ENCODE measurements at regions of chr1 and their contacts with region 1.

Region 1: DNA sequence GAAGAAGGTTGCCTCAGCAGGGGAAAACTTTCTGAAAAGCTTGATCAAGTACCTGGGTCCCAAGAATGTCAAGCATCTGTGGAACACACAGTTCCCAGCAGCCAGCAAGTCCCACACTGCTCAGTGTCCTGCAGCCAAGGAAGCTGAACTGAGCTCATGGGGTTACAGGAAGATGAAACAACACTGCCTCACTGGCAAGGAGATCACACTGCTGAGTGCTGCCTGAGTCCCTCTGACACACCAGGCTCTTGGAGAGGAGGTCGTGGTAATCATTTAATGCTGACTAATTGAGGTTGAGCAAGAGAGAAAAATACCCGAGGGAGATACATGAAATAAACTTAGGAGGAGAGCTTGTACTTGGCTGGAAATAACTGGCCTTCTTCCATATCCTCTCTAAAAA is 75.2 kb downstream of the MPZL1 start:
- DNase-seq: peak; percentile 100
- H3K4me3 Mint-ChIP-seq: peak overlapping the region; percentile 57
- H3K27ac Mint-ChIP-seq: peak overlapping the region; percentile 83
- H3K4me1 Mint-ChIP-seq: peaks cover 63% of the 10 kb centered on the region
- H3K27me3 Mint-ChIP-seq: no peaks in the 10 kb centered on the region
- CTCF ChIP-seq: peak; percentile 12

Region 2: DNA sequence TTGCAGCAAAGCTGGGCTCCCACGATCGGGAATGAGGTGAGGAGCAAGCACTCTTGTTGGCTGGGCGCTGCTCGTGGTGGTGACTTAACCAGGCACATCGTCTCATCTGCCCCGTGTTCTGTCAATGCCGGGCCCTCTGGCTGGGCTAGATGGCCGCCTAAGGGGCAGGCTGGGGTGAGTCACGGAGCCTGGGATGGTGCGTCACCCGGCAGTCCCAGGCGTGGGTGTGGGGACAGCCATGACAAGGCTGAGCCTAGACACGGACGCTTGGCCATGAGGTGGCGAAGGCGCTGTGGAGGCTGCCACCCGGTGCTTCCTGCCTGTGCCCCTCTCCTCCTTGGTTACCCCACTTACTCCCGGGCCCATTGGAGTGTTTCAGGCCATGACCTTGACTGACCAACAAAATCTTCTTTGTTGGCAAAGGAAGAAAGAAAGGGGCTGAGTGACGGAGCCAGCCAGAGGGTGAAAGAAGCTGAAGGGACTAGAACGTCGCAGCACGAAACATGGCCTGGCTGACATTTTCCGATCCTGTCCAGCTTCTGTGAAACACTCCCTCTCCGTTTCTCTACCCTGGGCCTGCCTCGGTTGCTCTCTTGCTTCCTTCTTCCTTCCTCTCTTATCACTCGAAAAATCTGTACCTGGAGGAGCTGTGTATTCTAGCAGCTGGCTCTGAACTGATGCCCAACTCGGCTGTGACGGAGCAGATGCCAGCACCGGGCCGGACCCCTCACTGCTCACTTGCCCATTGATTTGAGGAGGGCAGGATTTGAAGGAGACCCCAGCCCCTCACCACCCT is 279.3 kb before region 1 on chr1:
- CTCF ChIA-PET with region 1: no interaction called
- POLR2A ChIA-PET with region 1: no interaction called
- intact Hi-C with region 1: no loop called
- DNase-seq: peak; percentile 88
- H3K4me3 Mint-ChIP-seq: no peak overlapping the region
- H3K27ac Mint-ChIP-seq: no peak overlapping the region
- H3K4me1 Mint-ChIP-seq: no peaks in the 10 kb centered on the region
- H3K27me3 Mint-ChIP-seq: no peaks in the 10 kb centered on the region
- CTCF ChIP-seq: no peak

Region 3: GRCh38 chr1:167715157-167715999 is 81.6 kb before region 1 on chr1:
- CTCF ChIA-PET with region 1: interaction called, 46 read pairs
- POLR2A ChIA-PET with region 1: interaction called, 202 read pairs
- intact Hi-C with region 1: loop called (anchors 1 kb)
- DNase-seq: peak; percentile 97
- H3K4me3 Mint-ChIP-seq: peak overlapping the region; percentile 88
- H3K27ac Mint-ChIP-seq: peak overlapping the region; percentile 91
- H3K4me1 Mint-ChIP-seq: peaks cover 16% of the 10 kb centered on the region
- H3K27me3 Mint-ChIP-seq: no peaks in the 10 kb centered on the region
- CTCF ChIP-seq: peak; percentile 98

Region 4: GRCh38 chr1:167721617-167722151 is 75.3 kb before region 1 on chr1 and contains the start of gene MPZL1:
- CTCF ChIA-PET with region 1: interaction called, 46 read pairs
- POLR2A ChIA-PET with region 1: interaction called, 202 read pairs
- intact Hi-C with region 1: loop called (anchors 1 kb)
- DNase-seq: peak; percentile 95
- H3K4me3 Mint-ChIP-seq: peak within 1 kb of the TSS; percentile 84
- H3K27ac Mint-ChIP-seq: peak within 1 kb of the TSS; percentile 92
- H3K4me1 Mint-ChIP-seq: peaks cover 52% of the 10 kb centered on the region
- H3K27me3 Mint-ChIP-seq: no peaks in the 10 kb centered on the region
- CTCF ChIP-seq: no peak
- total RNA-seq, gene MPZL1: 164 and 169 TPM in 2 replicates

Region 5: DNA sequence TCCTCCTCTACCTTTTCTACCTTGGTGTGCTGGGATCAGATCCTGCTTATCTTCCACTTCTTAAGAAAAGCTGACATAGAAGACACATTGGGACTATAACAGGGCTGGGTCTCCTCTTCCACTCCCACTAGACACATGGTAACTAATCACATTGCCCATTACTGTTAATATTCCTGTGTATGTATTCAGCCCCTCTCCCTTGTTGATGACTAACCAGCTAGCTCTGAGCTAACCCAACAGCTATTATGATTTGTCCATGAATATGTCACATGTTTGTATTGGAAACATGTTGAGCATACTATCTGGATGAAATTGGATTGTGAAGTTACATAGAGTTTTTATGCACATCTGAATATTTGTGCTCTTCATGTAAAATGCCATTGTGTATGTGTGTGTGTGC is 22.3 kb before region 1 on chr1:
- CTCF ChIA-PET with region 1: interaction called, 7 read pairs
- POLR2A ChIA-PET with region 1: interaction called, 28 read pairs
- intact Hi-C with region 1: no loop called
- DNase-seq: no peak
- H3K4me3 Mint-ChIP-seq: no peak overlapping the region
- H3K27ac Mint-ChIP-seq: peak overlapping the region; percentile 0
- H3K4me1 Mint-ChIP-seq: peaks cover 25% of the 10 kb centered on the region
- H3K27me3 Mint-ChIP-seq: no peaks in the 10 kb centered on the region
- CTCF ChIP-seq: no peak

Region 6: GRCh38 chr1:167784876-167785550 is 12.0 kb before region 1 on chr1:
- CTCF ChIA-PET with region 1: interaction called, 67 read pairs
- POLR2A ChIA-PET with region 1: interaction called, 73 read pairs
- intact Hi-C with region 1: no loop called
- DNase-seq: no peak
- H3K4me3 Mint-ChIP-seq: no peak overlapping the region
- H3K27ac Mint-ChIP-seq: peak overlapping the region; percentile 53
- H3K4me1 Mint-ChIP-seq: peaks cover 25% of the 10 kb centered on the region
- H3K27me3 Mint-ChIP-seq: no peaks in the 10 kb centered on the region
- CTCF ChIP-seq: no peak

Region 7: GRCh38 chr1:167837326-167837725 is 40.3 kb after region 1 on chr1:
- CTCF ChIA-PET with region 1: no interaction called
- POLR2A ChIA-PET with region 1: no interaction called
- intact Hi-C with region 1: no loop called
- DNase-seq: no peak
- H3K4me3 Mint-ChIP-seq: no peak overlapping the region
- H3K27ac Mint-ChIP-seq: no peak overlapping the region
- H3K4me1 Mint-ChIP-seq: no peaks in the 10 kb centered on the region
- H3K27me3 Mint-ChIP-seq: no peaks in the 10 kb centered on the region
- CTCF ChIP-seq: no peak

Measured in MCF 10A (cell line).